PC-9 (cell line): ENCODE measurements at regions of chr15 and their contacts with region 1.

Region 1: GRCh38 chr15:92645030-92645756 is 10.4 kb downstream of the FAM174B start:
- DNase-seq: peak; percentile 61 to 95
- H3K4me3 ChIP-seq: peak overlapping the region; percentile 63; the same call in 1 of the 2 replicates
- H3K27ac ChIP-seq: peak overlapping the region; percentile 97
- H3K4me1 ChIP-seq: peaks cover 99% of the 10 kb centered on the region
- H3K27me3 ChIP-seq: no peaks in the 10 kb centered on the region
- CTCF ChIP-seq: no peak

Region 2: DNA sequence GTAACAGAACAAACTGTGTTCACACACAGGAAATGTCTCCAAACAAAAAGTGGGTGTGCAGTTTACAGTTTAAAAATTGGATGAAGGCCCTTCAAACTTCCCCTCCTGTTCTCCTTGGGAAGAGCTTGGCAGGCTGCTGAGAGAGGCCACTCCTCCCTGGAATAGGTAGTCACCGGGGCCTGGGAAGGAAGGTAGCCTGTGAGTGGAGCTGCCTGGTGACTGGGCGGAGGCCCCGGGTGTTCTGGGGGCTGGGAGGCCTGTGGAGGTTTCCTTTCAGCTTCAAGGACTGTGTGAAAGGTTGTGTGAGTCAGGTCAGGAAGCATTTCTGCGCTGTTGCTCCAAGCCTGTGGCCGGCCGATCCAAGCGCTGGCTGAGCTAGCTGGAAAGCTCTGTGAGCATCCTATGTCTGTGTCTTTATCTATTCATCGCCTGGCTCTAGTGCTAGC is 777.6 kb before region 1 on chr15:
- CTCF ChIA-PET with region 1: no interaction called
- POLR2A ChIA-PET with region 1: no interaction called
- intact Hi-C with region 1: loop called (anchors 10 kb)
- DNase-seq: peak; percentile 93 to 95
- H3K4me3 ChIP-seq: peak overlapping the region; percentile 43; the same call in 1 of the 2 replicates
- H3K27ac ChIP-seq: peak overlapping the region; percentile 95
- H3K4me1 ChIP-seq: peaks cover 57% of the 10 kb centered on the region
- H3K27me3 ChIP-seq: no peaks in the 10 kb centered on the region
- CTCF ChIP-seq: no peak

Region 3: DNA sequence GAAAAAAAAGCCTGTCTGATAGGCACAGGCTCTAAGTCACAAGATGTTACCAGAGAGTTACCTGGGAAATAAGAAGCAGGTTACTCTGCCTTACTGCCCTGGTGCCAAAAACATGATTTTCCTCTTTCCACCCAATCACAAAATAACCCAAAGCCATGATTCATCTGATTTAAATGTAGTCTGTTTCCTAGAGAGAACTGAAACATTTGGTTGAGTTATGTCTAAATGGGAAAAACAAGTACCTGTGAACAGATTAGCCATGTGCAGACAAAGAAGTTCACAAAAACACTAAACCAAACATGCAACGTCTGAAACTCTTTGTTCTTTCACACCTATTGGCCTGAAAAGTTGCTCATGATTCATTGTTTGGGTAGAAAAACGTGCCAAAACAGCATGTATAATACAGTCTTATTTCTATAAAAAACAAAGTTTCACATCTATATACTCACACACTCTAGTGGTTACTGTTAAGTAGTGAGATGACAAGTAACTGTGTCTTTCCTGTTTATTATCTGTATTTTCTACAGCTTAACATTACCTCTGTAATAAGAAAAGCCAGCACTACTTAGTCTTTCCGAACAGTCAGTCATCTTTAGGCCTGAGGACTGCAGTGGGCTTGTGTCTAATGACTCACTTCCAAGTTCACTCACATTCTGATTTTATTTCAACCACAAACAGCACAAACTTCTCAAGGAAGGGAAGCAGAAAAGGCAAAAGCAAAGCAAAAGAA is 19.8 kb before region 1 on chr15:
- CTCF ChIA-PET with region 1: no interaction called
- POLR2A ChIA-PET with region 1: no interaction called
- intact Hi-C with region 1: loop called (anchors 2 kb)
- DNase-seq: peak in 1 of 2 experiments; percentile 69
- H3K4me3 ChIP-seq: no peak overlapping the region
- H3K27ac ChIP-seq: peak overlapping the region; percentile 50
- H3K4me1 ChIP-seq: peaks cover 10% of the 10 kb centered on the region
- H3K27me3 ChIP-seq: no peaks in the 10 kb centered on the region
- CTCF ChIP-seq: no peak

Region 4: DNA sequence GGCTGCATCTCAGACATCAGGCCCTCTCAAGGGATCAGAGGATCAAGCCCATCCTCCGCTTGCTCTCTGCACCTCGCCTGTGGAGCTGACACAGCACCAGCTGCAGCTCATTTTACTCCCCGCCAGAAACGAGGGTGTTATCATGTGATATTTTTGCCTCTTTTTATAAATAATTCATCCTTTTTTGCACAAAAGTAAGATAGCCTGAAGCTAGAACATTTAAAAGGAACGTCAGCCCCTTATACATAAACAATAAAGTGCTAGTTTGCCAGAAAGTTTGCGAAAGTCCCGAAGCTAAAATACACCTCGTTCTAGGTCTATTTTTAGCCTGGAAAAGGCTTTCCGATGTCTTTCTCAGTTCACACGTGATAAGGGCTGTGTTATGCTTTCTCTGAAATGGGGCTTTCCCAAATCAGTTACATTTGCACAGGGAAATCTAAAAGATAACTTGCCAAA is 19.9 kb after region 1 on chr15:
- CTCF ChIA-PET with region 1: no interaction called
- POLR2A ChIA-PET with region 1: no interaction called
- intact Hi-C with region 1: no loop called
- DNase-seq: no peak
- H3K4me3 ChIP-seq: no peak overlapping the region
- H3K27ac ChIP-seq: no peak overlapping the region
- H3K4me1 ChIP-seq: peaks cover 54% of the 10 kb centered on the region
- H3K27me3 ChIP-seq: no peaks in the 10 kb centered on the region
- CTCF ChIP-seq: no peak

Region 5: DNA sequence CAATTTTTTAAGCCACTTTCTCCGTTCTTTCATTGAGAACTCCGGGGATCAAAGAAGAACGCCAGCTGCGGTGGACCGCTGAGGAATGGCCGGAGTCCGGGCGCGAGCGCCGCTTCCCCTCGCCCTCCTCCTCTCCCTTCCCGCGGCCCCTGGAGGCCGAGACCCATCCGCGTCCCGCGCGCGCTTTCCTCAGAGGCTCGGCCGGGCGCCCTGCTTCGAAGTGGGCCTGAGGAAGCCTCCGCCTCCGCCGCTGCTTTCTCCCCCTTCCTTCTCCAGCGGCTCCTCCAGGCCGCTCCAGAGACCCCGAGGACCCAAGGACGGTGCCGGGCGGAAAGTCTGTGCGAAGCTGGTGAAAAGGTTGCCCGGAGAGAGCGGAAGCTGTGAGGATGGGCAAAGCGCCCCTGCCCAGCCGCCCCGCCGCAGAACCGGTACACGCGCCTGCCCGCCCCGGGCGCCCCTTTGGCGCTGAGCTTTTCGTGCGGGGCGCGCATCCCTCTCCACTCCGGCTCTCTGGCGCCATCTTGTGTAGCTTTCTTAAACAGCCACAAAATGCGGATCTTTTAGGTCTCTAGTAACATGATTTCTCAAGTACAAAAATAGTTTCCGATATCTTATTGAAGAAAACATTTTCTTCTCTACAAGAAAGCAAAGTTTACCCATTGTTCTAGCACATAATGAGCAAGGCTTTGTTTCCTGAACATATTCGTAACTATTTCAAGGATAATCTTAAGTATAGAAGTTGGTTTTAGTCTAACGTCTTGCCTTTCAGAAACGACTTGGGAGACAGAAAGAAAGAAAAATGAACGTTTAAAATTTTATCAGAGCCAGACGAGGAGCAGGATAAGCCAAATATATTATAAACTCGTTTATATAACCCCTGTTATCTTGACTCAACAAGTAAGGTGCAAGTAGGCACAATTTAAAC is 69.5 kb after region 1 on chr15:
- CTCF ChIA-PET with region 1: no interaction called
- POLR2A ChIA-PET with region 1: interaction called, 6 read pairs
- intact Hi-C with region 1: loop called (anchors 2 kb)
- DNase-seq: peak; percentile 47 to 74
- H3K4me3 ChIP-seq: peak overlapping the region; percentile 60
- H3K27ac ChIP-seq: no peak overlapping the region
- H3K4me1 ChIP-seq: 0 out of 2 replicates have a peak, but pooled peaks cover 5% of the 10 kb centered on the region
- H3K27me3 ChIP-seq: no peaks in the 10 kb centered on the region
- CTCF ChIP-seq: peak; percentile 94

Region 6: GRCh38 chr15:92772626-92773244 is 127.5 kb after region 1 on chr15:
- CTCF ChIA-PET with region 1: no interaction called
- POLR2A ChIA-PET with region 1: no interaction called
- intact Hi-C with region 1: no loop called
- DNase-seq: no peak
- H3K4me3 ChIP-seq: no peak overlapping the region
- H3K27ac ChIP-seq: no peak overlapping the region
- H3K4me1 ChIP-seq: no peaks in the 10 kb centered on the region
- H3K27me3 ChIP-seq: no peaks in the 10 kb centered on the region
- CTCF ChIP-seq: no peak

Region 7: GRCh38 chr15:92903941-92904831 is 259.0 kb after region 1 on chr15:
- CTCF ChIA-PET with region 1: no interaction called
- POLR2A ChIA-PET with region 1: no interaction called
- intact Hi-C with region 1: loop called (anchors 2 kb)
- DNase-seq: peak; percentile 93 to 99
- H3K4me3 ChIP-seq: peak overlapping the region; percentile 94
- H3K27ac ChIP-seq: peak overlapping the region; percentile 98
- H3K4me1 ChIP-seq: peaks cover 45% of the 10 kb centered on the region
- H3K27me3 ChIP-seq: no peaks in the 10 kb centered on the region
- CTCF ChIP-seq: no peak